ENCODE measurements at regions of chr2 and their contacts with region 1.

Region 1: GRCh38 chr2:222743251-222743812 is 71.9 kb downstream of the MOGAT1 start:
- DNase-seq: no peak

Region 2: DNA sequence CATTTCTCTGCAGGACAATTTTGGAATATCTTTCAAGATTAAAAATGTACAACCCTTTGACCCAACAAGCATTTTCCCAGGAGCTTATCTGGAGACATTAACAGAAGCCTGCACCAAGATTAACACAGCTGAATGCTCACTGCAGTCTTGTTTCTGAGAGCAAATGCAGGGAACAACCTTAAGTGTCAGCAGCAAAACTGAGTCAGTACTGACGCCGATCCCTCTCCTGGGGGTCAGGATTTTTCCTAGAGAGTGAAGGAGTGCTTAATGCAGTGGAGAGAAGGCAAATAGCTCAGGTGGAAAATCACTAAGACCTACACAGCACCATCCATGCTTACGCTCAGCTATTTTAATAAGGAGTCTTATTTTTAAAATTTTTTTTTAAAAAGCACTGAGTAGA is 361.8 kb before region 1 on chr2:
- intact Hi-C with region 1: loop called in 1 of 2 experiments (anchors 5 kb)
- DNase-seq: no peak

Measured in posterior vena cava (tissue), 2 donors.